Thyroid gland (tissue), 4 donors: ENCODE measurements at regions of chr6 and their contacts with region 1.

Region 1: DNA sequence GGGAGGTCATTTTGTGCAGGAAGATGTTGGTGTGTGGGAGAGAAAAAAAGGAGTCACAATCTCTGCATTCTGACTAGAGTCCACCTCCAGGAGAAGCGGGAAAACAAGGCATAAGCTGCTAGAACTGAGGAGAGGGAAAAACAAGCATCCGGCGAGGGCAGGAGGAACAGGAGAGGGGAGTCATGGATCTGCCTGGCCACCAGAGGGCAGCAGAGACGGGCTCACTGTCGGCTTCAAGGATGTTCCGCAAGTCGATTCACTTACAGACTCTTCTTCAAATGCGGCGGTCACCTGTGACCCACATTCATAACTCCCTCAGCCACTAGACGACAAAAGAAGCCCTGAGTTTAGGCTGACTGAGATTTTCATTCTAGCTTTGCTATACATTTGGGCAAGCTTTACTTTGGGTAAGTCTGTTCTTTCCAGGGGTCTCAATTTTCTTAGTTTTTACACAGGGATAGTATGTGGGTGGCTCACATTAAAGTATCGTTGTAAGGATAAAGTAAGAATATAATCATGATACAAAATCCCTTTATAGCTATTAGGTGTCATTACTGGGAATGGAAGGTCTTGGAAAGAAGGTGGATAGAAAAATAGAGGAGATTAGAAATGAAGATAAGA is 6.6 kb upstream of the BTNL2 start:
- DNase-seq: peak; percentile 69 to 74
- H3K4me3 ChIP-seq: no peak overlapping the region
- H3K27ac ChIP-seq: no peak overlapping the region
- H3K4me1 ChIP-seq: no peaks in the 10 kb centered on the region
- H3K27me3 ChIP-seq: no peaks in the 10 kb centered on the region
- CTCF ChIP-seq: peak; percentile 79 to 97 (median 88)
- POLR2A ChIP-seq: no peak

Region 2: GRCh38 chr6:32271429-32271828 is 142.1 kb before region 1 on chr6:
- intact Hi-C with region 1: no loop called
- DNase-seq: no peak
- H3K4me3 ChIP-seq: no peak overlapping the region
- H3K27ac ChIP-seq: no peak overlapping the region
- H3K4me1 ChIP-seq: no peaks in the 10 kb centered on the region
- H3K27me3 ChIP-seq: no peaks in the 10 kb centered on the region
- CTCF ChIP-seq: no peak
- POLR2A ChIP-seq: no peak

Region 3: DNA sequence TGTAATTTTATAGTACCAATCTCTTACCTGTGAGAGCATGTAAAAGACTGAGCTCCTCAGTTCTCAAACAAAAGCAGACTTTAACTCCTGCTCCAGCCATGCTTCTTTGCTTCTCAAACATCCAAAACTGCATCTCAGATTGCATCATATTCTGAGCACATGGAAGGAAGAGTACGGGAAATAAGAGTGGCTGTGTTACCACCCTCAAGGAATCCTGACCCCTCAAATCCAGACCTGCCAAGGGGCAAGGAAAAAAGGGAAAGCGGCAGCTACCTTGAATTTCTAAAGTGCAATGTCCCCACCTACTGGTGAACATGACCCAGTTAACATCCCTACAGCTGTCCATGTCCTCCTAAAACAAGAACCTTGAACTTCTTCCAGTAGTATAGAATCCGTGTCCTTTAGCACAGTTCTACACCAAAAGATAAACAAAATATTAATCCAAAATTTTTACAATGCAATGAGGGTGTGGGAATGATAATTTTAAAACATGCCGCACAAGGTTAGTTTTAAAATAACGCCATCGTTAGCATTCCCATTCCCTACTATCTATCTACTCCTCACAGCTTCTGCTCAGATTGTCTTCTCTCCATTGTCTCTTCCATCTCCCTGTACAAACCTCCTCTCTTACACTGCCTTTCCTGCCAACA is 287.0 kb after region 1 on chr6:
- intact Hi-C with region 1: loop called (anchors 5 kb)
- DNase-seq: peak; percentile 20 to 37
- H3K4me3 ChIP-seq: no peak overlapping the region
- H3K27ac ChIP-seq: no peak overlapping the region
- H3K4me1 ChIP-seq: no peaks in the 10 kb centered on the region
- H3K27me3 ChIP-seq: no peaks in the 10 kb centered on the region
- CTCF ChIP-seq: peak in 4 of 6 experiments; percentile 42 to 74 (median 72)
- POLR2A ChIP-seq: no peak

Region 4: DNA sequence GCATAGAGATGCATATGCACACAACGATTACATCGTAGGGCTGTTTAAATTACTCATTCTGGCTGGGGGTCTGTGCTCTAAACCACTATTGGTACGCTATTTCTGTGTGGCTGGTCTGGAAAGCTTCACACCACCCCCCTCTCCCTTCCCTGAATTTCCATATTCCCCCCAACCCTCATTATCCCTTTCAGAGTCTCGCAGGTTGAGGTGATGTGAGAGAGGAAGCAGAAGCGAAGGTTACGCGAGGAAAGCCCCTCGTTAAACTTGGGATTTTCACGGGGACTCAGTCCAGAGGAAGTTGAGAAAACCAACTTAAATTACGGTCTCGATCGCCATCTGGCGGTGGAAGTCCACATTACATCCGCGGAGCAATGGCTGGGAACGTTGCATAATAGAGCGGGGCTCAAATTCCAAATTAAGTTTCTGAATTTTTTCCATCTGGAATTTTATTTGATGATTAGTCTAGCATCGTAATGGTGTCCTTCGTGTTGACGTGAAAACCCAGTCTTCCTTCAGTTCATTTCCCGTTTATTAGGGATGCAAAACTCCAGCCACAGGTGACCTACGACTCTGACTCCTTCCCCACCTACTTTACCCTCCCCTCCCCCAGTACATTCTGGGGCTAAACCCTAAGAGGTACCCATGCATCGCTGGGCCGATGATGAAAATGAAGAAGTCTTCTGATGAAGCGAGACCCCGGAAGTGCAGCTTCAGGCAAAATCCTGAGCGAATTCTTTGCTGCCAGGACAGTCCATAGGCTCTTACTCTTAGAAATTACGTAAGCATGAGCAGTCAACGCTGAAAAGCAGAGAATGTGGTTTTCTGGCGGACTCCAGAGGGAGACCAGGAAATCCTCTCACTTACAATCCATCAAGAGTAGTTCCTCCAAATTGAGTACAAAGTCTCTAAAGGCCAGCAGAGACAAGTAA is 383.6 kb after region 1 on chr6:
- intact Hi-C with region 1: loop called (anchors 5 kb)
- DNase-seq: peak; percentile 66 to 71
- H3K4me3 ChIP-seq: no peak overlapping the region
- H3K27ac ChIP-seq: no peak overlapping the region
- H3K4me1 ChIP-seq: no peaks in the 10 kb centered on the region
- H3K27me3 ChIP-seq: no peaks in the 10 kb centered on the region
- CTCF ChIP-seq: peak; percentile 81 to 92 (median 87)
- POLR2A ChIP-seq: no peak